ENCODE measurements at regions of chr17 and their contacts with region 1.

Region 1: DNA sequence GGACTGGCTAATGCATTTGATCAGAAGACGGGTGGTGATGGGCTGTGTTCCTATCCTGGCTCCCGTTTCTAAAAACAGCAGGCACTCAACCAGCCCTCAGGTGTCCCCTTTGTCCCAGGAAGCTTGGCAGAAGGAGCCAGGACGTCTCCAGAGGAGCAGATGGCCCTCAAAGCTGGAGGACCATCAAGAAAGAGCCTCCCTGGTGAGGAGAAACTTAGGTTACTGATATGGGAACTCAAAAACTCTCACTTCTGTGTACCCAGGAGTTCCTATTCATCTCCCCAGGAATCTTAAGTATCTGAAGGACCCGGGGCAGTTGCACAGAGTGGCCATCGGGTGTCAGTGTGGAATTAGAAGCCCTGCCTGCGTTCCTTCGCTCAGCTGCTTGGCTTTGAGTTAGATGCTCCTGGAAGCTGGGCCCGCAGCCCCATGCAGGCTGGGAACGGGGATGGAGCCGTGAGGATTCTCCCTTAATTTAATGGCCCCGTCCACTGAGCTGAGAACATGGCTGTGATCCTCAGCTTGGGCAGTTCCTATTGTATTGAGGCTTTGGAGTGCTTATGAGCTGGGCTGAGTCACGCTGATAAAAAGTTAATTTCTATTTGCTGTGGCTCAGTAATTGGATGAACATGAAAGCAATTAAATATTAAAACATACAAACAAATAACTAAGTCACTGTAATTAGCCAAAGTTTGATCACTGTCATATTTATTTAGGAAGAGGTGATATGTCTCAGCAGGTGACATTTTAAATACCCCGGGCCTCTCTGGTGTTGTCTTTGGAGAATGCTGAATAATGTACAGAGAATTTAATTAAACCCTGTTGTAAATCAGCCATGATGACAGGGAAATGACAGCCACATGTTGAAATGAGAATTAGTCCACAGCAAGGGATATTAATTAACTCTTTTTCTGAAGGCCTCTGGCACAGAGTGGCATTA is 402.1 kb downstream of the SEC14L1 start:
- DNase-seq: peak; percentile 35
- ATAC-seq: peak; percentile 83
- H3K4me3 Mint-ChIP-seq: no peak overlapping the region
- H3K27ac Mint-ChIP-seq: no peak overlapping the region
- H3K4me1 Mint-ChIP-seq: no peaks in the 10 kb centered on the region
- H3K27me3 Mint-ChIP-seq: peaks cover 8% of the 10 kb centered on the region
- CTCF ChIP-seq: no peak

Region 2: GRCh38 chr17:76816590-76817135 is 726.2 kb before region 1 on chr17:
- CTCF ChIA-PET with region 1: no interaction called
- POLR2A ChIA-PET with region 1: no interaction called
- intact Hi-C with region 1: no loop called
- DNase-seq: no peak
- ATAC-seq: peak; percentile 57
- H3K4me3 Mint-ChIP-seq: no peak overlapping the region
- H3K27ac Mint-ChIP-seq: no peak overlapping the region
- H3K4me1 Mint-ChIP-seq: peaks cover 7% of the 10 kb centered on the region
- H3K27me3 Mint-ChIP-seq: peaks cover 11% of the 10 kb centered on the region
- CTCF ChIP-seq: no peak

Region 3: GRCh38 chr17:77489911-77490255 is 52.9 kb before region 1 on chr17:
- CTCF ChIA-PET with region 1: no interaction called
- POLR2A ChIA-PET with region 1: no interaction called
- intact Hi-C with region 1: no loop called
- DNase-seq: no peak
- ATAC-seq: no peak
- H3K4me3 Mint-ChIP-seq: no peak overlapping the region
- H3K27ac Mint-ChIP-seq: no peak overlapping the region
- H3K4me1 Mint-ChIP-seq: peaks cover 32% of the 10 kb centered on the region
- H3K27me3 Mint-ChIP-seq: no peaks in the 10 kb centered on the region
- CTCF ChIP-seq: no peak

Region 4: DNA sequence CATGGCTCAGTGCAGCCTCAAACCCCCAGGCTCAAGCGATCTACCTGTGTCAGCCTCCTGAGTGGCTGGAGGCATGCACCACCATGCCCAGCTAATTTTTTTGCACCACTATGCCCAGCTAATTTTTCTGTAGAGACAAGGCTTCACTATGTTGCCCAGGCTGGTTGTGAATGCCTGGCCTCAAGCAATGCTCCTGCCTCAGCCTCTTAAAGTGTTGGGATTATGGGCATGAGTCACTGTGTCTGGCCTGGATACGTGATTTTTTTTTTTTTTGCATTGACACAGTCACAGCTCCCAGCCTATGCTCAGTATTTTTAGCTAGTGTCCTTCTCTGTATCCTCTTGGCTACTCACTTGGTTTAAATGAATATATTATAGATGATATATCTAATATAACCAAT is 38.7 kb after region 1 on chr17:
- CTCF ChIA-PET with region 1: no interaction called
- POLR2A ChIA-PET with region 1: no interaction called
- intact Hi-C with region 1: no loop called
- DNase-seq: no peak
- ATAC-seq: no peak
- H3K4me3 Mint-ChIP-seq: no peak overlapping the region
- H3K27ac Mint-ChIP-seq: no peak overlapping the region
- H3K4me1 Mint-ChIP-seq: peaks cover 7% of the 10 kb centered on the region
- H3K27me3 Mint-ChIP-seq: peaks cover 9% of the 10 kb centered on the region
- CTCF ChIP-seq: no peak

Region 5: DNA sequence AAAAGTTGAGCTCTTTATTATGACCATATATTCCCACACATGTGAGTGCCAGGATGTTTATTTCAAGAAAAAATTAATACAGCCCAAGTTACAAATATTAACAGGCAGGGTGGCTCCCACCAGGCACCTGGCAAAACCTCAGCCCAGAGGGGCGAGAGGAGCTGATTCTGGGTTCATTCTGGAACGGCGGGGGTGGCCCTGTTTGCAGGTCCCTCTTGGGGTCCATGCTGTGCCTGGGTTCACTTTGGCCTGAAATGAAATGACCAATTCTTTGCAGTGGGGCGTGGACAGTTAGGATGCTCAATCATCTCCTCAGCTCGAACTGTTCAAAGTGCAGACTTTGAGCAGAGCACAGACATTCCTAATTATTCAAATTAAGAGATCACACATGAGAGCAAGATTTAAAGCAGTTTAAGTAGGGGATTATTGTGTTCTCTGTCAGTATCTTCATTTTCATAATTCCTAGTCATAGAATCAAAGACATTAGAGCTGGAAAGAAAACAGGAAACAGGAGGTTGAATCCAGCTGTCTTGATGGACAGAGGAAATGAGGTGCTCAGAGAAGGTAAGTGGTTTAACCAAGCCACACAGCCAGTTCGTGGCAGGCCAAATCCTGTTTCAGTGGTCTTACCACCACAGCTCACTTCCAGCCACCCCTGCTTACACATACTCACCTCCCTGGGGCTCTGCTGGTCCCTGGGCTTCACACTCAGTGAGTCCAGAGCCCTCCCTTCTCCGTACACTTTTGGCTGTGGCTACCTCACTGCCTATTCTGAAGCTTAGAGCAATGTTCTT is 51.8 kb after region 1 on chr17:
- CTCF ChIA-PET with region 1: no interaction called
- POLR2A ChIA-PET with region 1: no interaction called
- intact Hi-C with region 1: no loop called
- DNase-seq: no peak
- ATAC-seq: no peak
- H3K4me3 Mint-ChIP-seq: no peak overlapping the region
- H3K27ac Mint-ChIP-seq: no peak overlapping the region
- H3K4me1 Mint-ChIP-seq: no peaks in the 10 kb centered on the region
- H3K27me3 Mint-ChIP-seq: peaks cover 34% of the 10 kb centered on the region
- CTCF ChIP-seq: no peak

Region 6: DNA sequence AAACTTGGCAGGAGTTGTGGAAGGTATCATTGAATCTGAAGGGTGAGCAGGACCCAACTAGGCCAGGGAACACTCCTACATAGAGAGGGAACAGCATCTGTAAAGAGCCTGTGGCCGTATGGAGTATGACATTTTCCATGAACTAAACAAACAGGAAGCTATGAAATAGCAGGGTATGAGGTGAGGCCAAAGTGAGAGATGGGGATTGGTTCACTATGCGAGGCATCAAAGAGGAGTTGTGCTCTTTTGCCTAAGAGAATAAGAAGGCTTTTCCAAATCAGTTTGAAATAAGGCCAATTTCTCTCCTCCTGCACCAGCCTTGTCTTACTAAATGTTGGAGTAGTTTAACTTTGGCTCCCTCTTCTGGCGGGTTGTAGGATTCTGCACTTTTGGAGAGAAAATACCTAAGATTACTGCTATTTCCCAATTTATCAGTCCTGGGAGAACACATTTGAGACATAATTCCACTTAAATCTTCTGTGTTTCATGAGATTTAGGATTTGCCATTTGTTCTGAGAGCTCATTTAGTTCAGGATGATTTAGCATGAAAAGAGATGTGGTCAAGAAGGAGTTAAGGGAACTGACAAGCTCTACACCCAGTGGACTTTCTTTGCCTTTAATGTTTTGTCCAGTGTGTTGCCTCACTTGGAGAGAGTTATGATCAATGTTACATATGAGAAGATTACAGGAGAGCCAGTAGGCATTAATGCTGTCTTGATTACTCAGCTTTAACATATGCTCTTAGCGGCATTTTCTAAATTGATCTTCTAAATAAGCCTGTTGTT is 471.1 kb after region 1 on chr17:
- CTCF ChIA-PET with region 1: interaction called, 119 read pairs
- POLR2A ChIA-PET with region 1: no interaction called
- intact Hi-C with region 1: loop called (anchors 1 kb)
- DNase-seq: no peak
- ATAC-seq: peak; percentile 54
- H3K4me3 Mint-ChIP-seq: no peak overlapping the region
- H3K27ac Mint-ChIP-seq: no peak overlapping the region
- H3K4me1 Mint-ChIP-seq: peaks cover 2% of the 10 kb centered on the region
- H3K27me3 Mint-ChIP-seq: no peaks in the 10 kb centered on the region
- CTCF ChIP-seq: peak; percentile 52

Measured in activated B cell treated with CpG ODN at 0.5 μM for 24 hours (primary cell).